Common myeloid progenitor, CD34-positive (primary cell): ENCODE measurements at regions of chr20 and their contacts with region 1.

Region 1: DNA sequence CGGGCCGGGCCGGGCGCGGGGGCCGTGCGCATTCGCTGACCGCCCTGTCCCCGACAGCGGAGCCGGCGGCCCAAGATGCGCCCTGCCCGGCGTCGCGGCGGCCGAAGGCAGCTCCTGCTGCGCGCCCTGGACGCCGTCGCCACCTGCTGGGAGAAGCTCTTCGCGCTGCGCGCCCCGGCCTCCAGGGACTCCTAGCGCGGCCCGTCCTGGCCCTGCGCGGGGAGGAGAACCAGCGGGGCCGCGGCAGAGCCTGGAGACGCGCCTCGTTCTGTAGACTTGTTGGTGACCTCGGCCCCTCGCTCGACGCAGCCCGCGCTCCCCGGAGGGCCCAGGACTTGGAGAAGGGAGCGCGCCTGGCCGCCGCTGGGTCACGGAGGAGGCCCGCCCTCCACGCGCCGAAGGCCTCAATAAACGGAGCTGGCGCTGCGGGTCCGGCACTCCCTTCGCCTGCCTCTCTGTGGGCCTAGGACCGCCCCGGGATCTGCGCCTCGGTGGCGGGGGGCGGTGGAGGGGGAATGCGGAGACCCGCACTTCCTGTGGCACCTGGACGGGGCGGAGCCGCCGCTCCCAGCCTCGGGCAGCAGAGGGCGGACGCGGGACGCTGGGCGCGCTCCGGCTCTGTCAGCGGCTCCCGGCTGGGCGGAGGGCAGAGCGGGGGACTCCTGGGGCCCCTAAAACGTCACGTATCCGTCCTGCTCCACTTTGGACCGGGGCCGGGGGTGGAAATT is 2.7 kb downstream of the C20orf204 start:
- DNase-seq: peak; percentile 60 to 80 (median 72)
- H3K4me3 ChIP-seq: peak overlapping the region; percentile 21 to 78 (median 49)
- H3K27ac ChIP-seq: no peak overlapping the region
- H3K4me1 ChIP-seq: peaks cover 10 to 69% (median 63%) of the 10 kb centered on the region in 4 experiments
- H3K27me3 ChIP-seq: peaks cover 0 to 8% (median 2%) of the 10 kb centered on the region in 5 experiments

Region 2: DNA sequence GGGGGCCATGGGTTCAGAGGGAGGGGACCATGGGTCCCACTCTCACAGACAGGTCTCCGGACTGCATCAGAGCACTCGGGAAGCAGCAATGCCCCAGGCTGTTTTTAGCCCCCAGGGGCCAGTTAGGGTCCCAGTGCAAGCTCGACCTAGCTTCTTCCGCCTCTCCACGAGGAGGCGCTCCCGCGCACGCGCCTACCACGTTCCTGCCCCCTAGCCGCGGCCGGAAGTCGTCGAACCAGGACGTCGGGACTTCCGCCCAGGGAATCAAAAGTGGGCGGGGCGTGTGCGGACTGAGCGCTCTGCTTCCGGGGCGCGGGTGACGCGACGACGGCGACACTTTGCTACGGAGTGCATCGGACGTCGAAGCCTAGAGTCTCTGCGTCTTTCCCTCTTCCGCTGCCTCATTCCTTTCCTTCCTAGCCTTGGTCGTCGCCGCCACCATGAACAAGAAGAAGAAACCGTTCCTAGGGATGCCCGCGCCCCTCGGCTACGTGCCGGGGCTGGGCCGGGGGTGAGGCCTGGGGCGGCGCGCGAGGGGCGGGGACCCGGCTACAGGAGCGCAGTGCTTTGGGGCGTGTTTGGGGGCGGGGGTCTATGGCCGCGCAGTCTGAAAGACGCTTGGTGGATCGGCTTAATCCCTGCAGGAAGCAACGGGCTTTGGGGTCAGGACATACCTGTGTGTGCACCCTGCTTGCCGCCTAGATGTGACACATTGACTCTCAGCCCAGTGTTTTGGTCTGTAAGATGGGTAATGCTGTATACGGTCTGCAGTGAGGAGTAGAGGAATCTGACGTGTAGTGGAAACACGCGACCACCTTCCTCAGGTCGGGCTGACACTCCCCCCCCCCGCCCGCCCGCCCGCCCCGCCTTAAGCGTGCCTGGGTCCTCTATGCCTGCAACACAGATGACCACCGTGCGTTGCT is 57.7 kb before region 1 on chr20 and contains the start of gene PRPF6:
- CTCF ChIA-PET with region 1: interaction called, 18 read pairs
- POLR2A ChIA-PET with region 1: interaction called, 3 read pairs
- DNase-seq: peak; percentile 96 to 98 (median 98)
- H3K4me3 ChIP-seq: peak within 1 kb of the TSS; percentile 77 to 99 (median 89)
- H3K27ac ChIP-seq: peak within 1 kb of the TSS in 1 of 2 experiments; percentile 88
- H3K4me1 ChIP-seq: peaks cover 5 to 49% (median 43%) of the 10 kb centered on the region in 4 experiments
- H3K27me3 ChIP-seq: no peaks in the 10 kb centered on the region

Region 3: GRCh38 chr20:64027981-64028685 is 10.6 kb before region 1 on chr20:
- CTCF ChIA-PET with region 1: interaction called, 16 read pairs
- POLR2A ChIA-PET with region 1: no interaction called
- DNase-seq: no peak
- H3K4me3 ChIP-seq: no peak overlapping the region
- H3K27ac ChIP-seq: no peak overlapping the region
- H3K4me1 ChIP-seq: no peaks in the 10 kb centered on the region
- H3K27me3 ChIP-seq: no peaks in the 10 kb centered on the region

Region 4: GRCh38 chr20:64062596-64063388 is 24.1 kb after region 1 on chr20 and contains the start of gene TCEA2:
- CTCF ChIA-PET with region 1: interaction called, 187 read pairs
- POLR2A ChIA-PET with region 1: interaction called, 6 read pairs
- DNase-seq: peak; percentile 89 to 94 (median 93)
- H3K4me3 ChIP-seq: peak within 1 kb of the TSS; percentile 58 to 83 (median 76)
- H3K27ac ChIP-seq: peak within 1 kb of the TSS; percentile 33 to 83
- H3K4me1 ChIP-seq: peaks cover 2 to 61% (median 56%) of the 10 kb centered on the region in 4 experiments
- H3K27me3 ChIP-seq: no peaks in the 10 kb centered on the region